T-cell (primary cell): ENCODE measurements at regions of chr9 and their contacts with region 1.

Region 1: GRCh38 chr9:112784020-112784781 is 33.6 kb downstream of the SNX30 start:
- DNase-seq: no peak
- ATAC-seq: no peak
- H3K4me3 ChIP-seq: no peak overlapping the region
- H3K4me3 Mint-ChIP-seq: no peak overlapping the region
- H3K27ac ChIP-seq: no peak overlapping the region
- H3K27ac Mint-ChIP-seq: no peak overlapping the region
- H3K4me1 ChIP-seq: peaks cover 0 to 9% of the 10 kb centered on the region in 2 experiments
- H3K4me1 Mint-ChIP-seq: peaks cover 48 to 61% (median 53%) of the 10 kb centered on the region in 3 donors
- H3K27me3 ChIP-seq: no peaks in the 10 kb centered on the region
- H3K27me3 Mint-ChIP-seq: no peaks in the 10 kb centered on the region

Region 2: GRCh38 chr9:112311497-112311896 is 472.7 kb before region 1 on chr9:
- CTCF ChIA-PET with region 1: interaction called in 1 of 2 experiments, 11 read pairs
- POLR2A ChIA-PET with region 1: no interaction called
- DNase-seq: no peak
- ATAC-seq: no peak
- H3K4me3 ChIP-seq: no peak overlapping the region
- H3K4me3 Mint-ChIP-seq: no peak overlapping the region
- H3K27ac ChIP-seq: no peak overlapping the region
- H3K27ac Mint-ChIP-seq: no peak overlapping the region
- H3K4me1 ChIP-seq: peaks cover 7 to 21% of the 10 kb centered on the region in 2 experiments
- H3K4me1 Mint-ChIP-seq: peaks cover 68 to 78% (median 77%) of the 10 kb centered on the region in 3 donors
- H3K27me3 ChIP-seq: no peaks in the 10 kb centered on the region
- H3K27me3 Mint-ChIP-seq: no peaks in the 10 kb centered on the region

Region 3: GRCh38 chr9:112743216-112743836 is 40.9 kb before region 1 on chr9:
- CTCF ChIA-PET with region 1: no interaction called
- POLR2A ChIA-PET with region 1: no interaction called
- DNase-seq: no peak
- ATAC-seq: no peak
- H3K4me3 ChIP-seq: no peak overlapping the region
- H3K4me3 Mint-ChIP-seq: no peak overlapping the region
- H3K27ac ChIP-seq: no peak overlapping the region
- H3K27ac Mint-ChIP-seq: no peak overlapping the region
- H3K4me1 ChIP-seq: peaks cover 0 to 9% of the 10 kb centered on the region in 2 experiments
- H3K4me1 Mint-ChIP-seq: peaks cover 27 to 31% (median 29%) of the 10 kb centered on the region in 3 donors
- H3K27me3 ChIP-seq: no peaks in the 10 kb centered on the region
- H3K27me3 Mint-ChIP-seq: no peaks in the 10 kb centered on the region